Activated naive CD4-positive, alpha-beta T cell treated with anti-CD3 and anti-CD28 coated beads, Interleukin-2, amount 10 ng/mL, durations not matched to agents 7 days and 5 days (primary cell): ENCODE measurements at regions of chr1 and their contacts with region 1.

Region 1: GRCh38 chr1:8848663-8849386 is 29.7 kb downstream of the ENO1 start:
- DNase-seq: peak; percentile 81
- H3K4me3 Mint-ChIP-seq: no peak overlapping the region
- H3K27ac Mint-ChIP-seq: no peak overlapping the region
- H3K4me1 Mint-ChIP-seq: peaks cover 9% of the 10 kb centered on the region
- H3K27me3 Mint-ChIP-seq: peaks cover 26% of the 10 kb centered on the region

Region 2: GRCh38 chr1:8554956-8555534 is 293.8 kb before region 1 on chr1:
- CTCF ChIA-PET with region 1: interaction called, 46 read pairs
- DNase-seq: no peak
- H3K4me3 Mint-ChIP-seq: no peak overlapping the region
- H3K27ac Mint-ChIP-seq: peak overlapping the region; percentile 22
- H3K4me1 Mint-ChIP-seq: peaks cover 40% of the 10 kb centered on the region
- H3K27me3 Mint-ChIP-seq: no peaks in the 10 kb centered on the region

Region 3: DNA sequence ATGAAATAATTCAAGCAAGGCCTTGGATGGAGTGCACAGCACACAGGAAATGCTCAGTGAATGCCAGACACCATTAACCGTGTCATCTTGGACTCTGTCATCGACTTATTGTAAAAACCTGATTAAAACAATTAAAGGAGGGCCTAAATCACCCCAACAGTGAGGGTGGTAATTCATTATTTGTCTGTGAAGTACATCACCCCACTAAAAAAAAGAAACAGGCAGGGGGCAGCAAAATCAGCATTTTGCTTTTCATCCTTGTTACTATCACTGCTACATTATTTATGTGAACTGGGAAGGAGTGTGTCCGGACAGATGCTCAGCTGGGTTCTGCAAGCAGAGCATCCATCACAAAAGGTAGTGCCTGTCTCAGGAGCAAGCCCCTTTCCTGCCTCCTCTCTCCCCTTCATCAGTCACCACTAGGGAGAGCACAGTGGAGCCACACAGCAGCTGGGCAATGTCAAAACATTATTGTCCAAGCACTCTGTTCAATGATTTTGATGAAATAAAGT is 129.9 kb before region 1 on chr1:
- CTCF ChIA-PET with region 1: interaction called, 11 read pairs
- DNase-seq: no peak
- H3K4me3 Mint-ChIP-seq: no peak overlapping the region
- H3K27ac Mint-ChIP-seq: no peak overlapping the region
- H3K4me1 Mint-ChIP-seq: peaks cover 47% of the 10 kb centered on the region
- H3K27me3 Mint-ChIP-seq: no peaks in the 10 kb centered on the region

Region 4: GRCh38 chr1:8794569-8794968 is 54.3 kb before region 1 on chr1:
- CTCF ChIA-PET with region 1: interaction called, 21 read pairs
- DNase-seq: no peak
- H3K4me3 Mint-ChIP-seq: no peak overlapping the region
- H3K27ac Mint-ChIP-seq: no peak overlapping the region
- H3K4me1 Mint-ChIP-seq: no peaks in the 10 kb centered on the region
- H3K27me3 Mint-ChIP-seq: no peaks in the 10 kb centered on the region

Region 5: DNA sequence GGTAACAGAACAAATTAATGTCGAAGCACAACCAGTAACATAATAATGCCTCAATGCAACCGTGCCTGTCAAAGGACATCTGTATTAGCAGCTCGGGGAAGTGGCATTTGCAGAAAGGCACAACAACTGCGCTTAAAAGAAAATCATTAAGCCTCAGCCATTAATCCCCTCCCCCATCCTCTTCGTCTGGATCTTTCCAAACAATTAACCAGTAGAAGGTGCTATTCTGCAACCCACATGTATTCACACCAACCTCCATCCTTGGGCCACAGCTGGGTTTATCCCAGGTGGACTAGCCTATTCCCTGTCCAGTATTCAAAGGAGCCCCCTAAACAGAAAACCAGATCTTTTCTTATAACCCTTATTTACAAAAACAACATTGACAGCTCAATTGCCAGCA is 34.0 kb before region 1 on chr1:
- CTCF ChIA-PET with region 1: interaction called, 17 read pairs
- DNase-seq: no peak
- H3K4me3 Mint-ChIP-seq: no peak overlapping the region
- H3K27ac Mint-ChIP-seq: no peak overlapping the region
- H3K4me1 Mint-ChIP-seq: peaks cover 40% of the 10 kb centered on the region
- H3K27me3 Mint-ChIP-seq: peaks cover 21% of the 10 kb centered on the region

Region 6: GRCh38 chr1:9004700-9005394 is 156.0 kb after region 1 on chr1:
- CTCF ChIA-PET with region 1: interaction called, 19 read pairs
- DNase-seq: peak; percentile 91
- H3K4me3 Mint-ChIP-seq: peak overlapping the region; percentile 50
- H3K27ac Mint-ChIP-seq: peak overlapping the region; percentile 75
- H3K4me1 Mint-ChIP-seq: peaks cover 13% of the 10 kb centered on the region
- H3K27me3 Mint-ChIP-seq: peaks cover 35% of the 10 kb centered on the region